Heart right ventricle (tissue), 16 donors: ENCODE measurements at regions of chr13 and their contacts with region 1.

Region 1: GRCh38 chr13:94345374-94346195 is 133.9 kb downstream of the DCT start:
- DNase-seq: no peak
- ATAC-seq: peak in 5 of 8 donors; percentile 30 to 60 (median 47)
- H3K4me3 ChIP-seq: no peak overlapping the region
- H3K27ac ChIP-seq: no peak overlapping the region
- H3K4me1 ChIP-seq: peaks cover 0 to 26% (median 9%) of the 10 kb centered on the region in 9 donors
- H3K27me3 ChIP-seq: peaks cover 0 to 7% (median 0%) of the 10 kb centered on the region in 7 donors
- CTCF ChIP-seq: peak in 2 of 9 donors; percentile 8 to 36

Region 2: DNA sequence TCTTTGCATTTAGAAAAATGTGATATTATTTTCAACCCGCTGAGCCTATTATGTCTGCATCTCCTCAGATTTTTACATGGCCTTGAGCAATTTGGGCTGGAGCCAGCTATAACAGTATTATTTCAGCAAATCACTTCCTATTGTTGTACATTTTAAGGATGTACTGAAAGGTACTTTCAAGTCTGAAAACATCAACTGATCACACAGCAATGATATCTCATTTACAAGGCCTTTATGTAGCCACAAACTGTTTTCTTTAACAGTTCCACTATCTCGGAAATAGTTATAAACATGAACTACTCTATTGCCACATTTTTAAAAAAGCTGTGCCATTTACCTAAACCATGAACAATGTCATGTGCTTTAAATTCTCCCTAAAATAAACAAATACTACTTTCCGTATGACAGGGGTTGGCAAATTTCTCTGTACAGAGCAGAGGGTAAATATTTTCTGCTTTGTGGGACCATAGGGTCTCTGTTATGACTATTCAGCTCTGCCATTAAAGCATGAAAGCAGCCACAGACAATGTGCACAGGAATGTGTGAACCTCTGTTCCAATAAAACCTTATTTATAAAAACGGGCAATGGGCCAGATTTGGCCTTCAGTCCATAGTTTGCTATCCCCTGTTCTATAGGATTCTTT is 558.6 kb before region 1 on chr13:
- intact Hi-C with region 1: no loop called
- DNase-seq: no peak
- ATAC-seq: no peak
- H3K4me3 ChIP-seq: no peak overlapping the region
- H3K27ac ChIP-seq: no peak overlapping the region
- H3K4me1 ChIP-seq: no peaks in the 10 kb centered on the region
- H3K27me3 ChIP-seq: no peaks in the 10 kb centered on the region
- CTCF ChIP-seq: no peak

Region 3: DNA sequence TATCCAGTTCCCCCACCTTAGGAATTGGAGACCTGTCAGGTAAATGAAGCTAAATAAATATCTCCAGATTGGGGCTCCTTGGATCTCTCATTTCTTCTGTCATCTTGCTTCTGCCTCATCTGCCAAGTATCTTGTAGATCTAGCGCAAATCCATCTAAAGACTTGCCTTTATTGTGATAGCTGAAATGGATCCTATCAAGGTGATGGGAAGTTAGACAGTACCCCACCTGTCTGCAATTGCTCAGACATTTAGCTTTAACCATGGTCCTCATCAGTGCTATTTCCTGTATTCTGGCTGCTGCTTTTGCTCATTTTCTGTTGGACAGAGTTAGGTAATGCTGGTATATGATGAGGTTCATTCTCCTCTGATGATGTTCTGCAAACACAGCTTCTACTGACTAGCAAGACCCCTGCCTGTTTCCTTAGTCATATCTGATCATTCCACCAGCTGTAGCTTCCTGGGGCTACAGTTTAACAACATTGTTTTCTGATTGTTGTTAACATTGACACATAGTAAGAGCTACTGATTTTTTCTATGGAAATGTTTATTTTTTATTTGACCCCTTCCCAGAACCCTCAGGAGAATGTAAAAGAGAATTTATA is 206.1 kb before region 1 on chr13:
- intact Hi-C with region 1: no loop called
- DNase-seq: no peak
- ATAC-seq: no peak
- H3K4me3 ChIP-seq: no peak overlapping the region
- H3K27ac ChIP-seq: no peak overlapping the region
- H3K4me1 ChIP-seq: no peaks in the 10 kb centered on the region
- H3K27me3 ChIP-seq: no peaks in the 10 kb centered on the region
- CTCF ChIP-seq: no peak

Region 4: GRCh38 chr13:94192431-94192975 is 153.1 kb before region 1 on chr13:
- intact Hi-C with region 1: loop called in 1 of 10 experiments (anchors 5 kb)
- DNase-seq: peak in 1 of 2 donors; percentile 9
- ATAC-seq: peak in 1 of 8 donors; percentile 57
- H3K4me3 ChIP-seq: no peak overlapping the region
- H3K27ac ChIP-seq: no peak overlapping the region
- H3K4me1 ChIP-seq: peaks cover 0 to 5% (median 0%) of the 10 kb centered on the region in 9 donors
- H3K27me3 ChIP-seq: no peaks in the 10 kb centered on the region
- CTCF ChIP-seq: peak in 8 of 9 donors; percentile 16 to 51 (median 37)

Region 5: GRCh38 chr13:94239135-94239534 is 106.5 kb before region 1 on chr13:
- intact Hi-C with region 1: no loop called
- DNase-seq: no peak
- ATAC-seq: no peak
- H3K4me3 ChIP-seq: no peak overlapping the region
- H3K27ac ChIP-seq: no peak overlapping the region
- H3K4me1 ChIP-seq: peaks cover 0 to 16% (median 0%) of the 10 kb centered on the region in 9 donors
- H3K27me3 ChIP-seq: no peaks in the 10 kb centered on the region
- CTCF ChIP-seq: no peak

Region 6: DNA sequence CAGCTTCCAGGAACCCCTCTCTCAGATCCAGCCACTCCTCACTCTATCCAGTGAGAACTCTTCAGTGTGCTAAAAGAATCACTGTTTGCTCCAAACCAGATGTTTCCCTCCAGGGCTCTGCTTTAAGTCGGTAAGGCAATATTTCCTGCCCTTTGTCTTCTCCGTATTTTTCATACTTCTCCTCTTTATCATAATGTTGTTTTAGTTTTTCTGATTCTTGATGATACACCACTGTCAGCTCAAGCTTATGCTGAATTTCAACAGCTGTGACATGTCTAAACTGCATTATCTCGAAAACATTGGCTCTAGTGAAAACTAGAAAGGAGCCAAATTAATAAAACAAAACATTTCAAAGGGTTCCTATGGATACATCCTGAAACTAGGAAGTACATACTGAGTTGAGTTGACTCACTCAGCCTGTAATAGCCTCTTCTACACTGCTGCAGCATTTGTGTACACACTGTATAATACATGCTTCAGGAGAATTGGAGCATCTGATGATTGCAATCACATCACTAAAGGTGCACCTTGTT is 295.9 kb after region 1 on chr13:
- intact Hi-C with region 1: no loop called
- DNase-seq: no peak
- ATAC-seq: peak in 3 of 8 donors; percentile 49 to 56 (median 50)
- H3K4me3 ChIP-seq: no peak overlapping the region
- H3K27ac ChIP-seq: peak overlapping the region in 1 of 10 donors; percentile 12
- H3K4me1 ChIP-seq: peaks cover 0 to 10% (median 0%) of the 10 kb centered on the region in 9 donors
- H3K27me3 ChIP-seq: no peaks in the 10 kb centered on the region
- CTCF ChIP-seq: no peak